GM13976 (cell line): ENCODE measurements at regions of chr10 and their contacts with region 1.

Region 1: DNA sequence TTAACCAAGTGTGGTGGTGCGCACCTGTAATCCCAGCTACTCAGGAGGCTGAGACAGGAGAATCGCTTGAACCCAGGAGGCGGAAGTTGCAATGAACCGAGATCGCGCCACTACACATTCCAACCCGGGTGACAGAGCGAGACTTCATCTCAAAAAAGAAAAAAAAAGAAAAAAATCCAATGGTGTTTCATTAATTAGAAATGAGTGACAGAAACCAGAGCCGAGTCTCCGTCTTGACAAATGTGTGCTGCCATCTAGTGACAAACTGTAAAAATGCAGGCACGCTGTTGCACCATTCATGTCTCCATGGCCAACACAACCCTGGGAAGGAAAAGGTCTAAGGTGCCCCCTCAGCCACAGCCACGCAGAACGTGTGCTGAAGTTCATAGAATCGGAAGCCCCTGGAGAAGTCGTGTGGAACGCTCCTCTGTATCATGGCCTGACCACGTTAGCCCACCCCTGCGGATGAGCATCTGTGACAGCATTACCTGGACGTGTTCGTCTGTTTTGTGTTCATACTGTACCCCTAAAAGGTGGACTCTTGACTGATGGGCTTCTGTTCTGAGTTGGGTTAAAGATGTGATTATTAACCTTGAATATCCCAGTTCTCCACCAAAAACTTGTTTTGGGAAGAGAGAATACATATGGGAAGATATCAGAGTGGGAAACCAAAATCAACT is 94.9 kb downstream of the LYZL2 start:
- DNase-seq: peak; percentile 66
- CTCF ChIP-seq: peak; percentile 79

Region 2: DNA sequence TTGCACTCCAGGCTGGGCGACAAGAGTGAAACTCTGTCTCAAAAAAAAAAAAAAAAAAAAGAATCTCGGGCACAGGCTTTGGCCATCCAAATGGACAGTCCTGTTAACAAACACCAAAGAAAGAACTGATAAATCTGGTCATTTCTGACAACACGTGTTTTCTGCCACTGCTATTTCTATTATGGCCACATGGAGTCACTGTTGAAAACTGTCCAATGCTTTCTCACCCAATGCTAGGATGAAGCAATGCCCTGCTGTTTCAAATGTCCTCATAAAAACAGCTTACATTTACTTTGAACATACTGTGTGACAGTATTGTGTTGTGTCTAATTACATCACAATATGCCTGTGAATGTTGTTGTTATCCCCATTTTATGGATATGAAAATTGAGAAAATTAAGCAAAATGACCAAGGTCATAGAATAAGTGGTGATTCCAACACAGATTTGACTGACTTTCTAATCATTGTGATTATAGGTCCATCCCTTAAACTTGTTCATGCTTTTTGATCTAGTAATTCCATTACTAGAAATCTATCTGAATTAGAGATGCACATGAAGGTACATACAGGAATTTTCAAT is 120.5 kb before region 1 on chr10:
- in situ Hi-C with region 1: loop called (anchors 5 kb)
- DNase-seq: peak; percentile 65
- CTCF ChIP-seq: peak; percentile 67

Region 3: DNA sequence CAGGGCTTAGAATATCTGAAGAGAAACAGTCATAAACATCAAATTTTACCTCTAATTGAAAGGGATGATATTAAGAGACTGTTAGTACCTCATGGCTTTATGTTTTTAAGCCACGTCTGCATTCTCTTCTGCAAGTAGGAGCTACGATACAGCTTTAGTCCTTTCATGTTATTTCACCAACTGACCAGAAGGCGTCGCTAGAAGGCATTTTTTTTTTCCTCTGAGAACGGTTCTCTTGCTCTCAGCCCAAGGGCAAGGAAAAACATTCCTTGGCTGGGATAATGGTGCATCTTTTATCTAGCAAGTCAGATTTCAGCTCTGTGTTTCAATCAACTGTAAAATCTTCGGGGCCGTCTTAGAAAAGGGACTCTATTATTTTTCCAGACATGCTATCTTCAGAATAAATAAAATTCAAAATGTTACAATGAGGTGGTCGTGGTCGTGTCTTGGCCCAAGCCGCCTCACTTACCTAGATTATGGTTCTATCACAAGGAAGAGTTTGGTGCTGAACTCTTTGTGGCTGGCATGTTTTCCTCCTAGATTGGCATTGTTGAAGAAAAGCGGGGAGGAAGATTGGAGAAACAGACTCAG is 136.5 kb after region 1 on chr10:
- in situ Hi-C with region 1: no loop called
- DNase-seq: peak; percentile 59
- CTCF ChIP-seq: peak; percentile 66